ENCODE measurements at regions of chr17 and their contacts with region 1.

Region 1: DNA sequence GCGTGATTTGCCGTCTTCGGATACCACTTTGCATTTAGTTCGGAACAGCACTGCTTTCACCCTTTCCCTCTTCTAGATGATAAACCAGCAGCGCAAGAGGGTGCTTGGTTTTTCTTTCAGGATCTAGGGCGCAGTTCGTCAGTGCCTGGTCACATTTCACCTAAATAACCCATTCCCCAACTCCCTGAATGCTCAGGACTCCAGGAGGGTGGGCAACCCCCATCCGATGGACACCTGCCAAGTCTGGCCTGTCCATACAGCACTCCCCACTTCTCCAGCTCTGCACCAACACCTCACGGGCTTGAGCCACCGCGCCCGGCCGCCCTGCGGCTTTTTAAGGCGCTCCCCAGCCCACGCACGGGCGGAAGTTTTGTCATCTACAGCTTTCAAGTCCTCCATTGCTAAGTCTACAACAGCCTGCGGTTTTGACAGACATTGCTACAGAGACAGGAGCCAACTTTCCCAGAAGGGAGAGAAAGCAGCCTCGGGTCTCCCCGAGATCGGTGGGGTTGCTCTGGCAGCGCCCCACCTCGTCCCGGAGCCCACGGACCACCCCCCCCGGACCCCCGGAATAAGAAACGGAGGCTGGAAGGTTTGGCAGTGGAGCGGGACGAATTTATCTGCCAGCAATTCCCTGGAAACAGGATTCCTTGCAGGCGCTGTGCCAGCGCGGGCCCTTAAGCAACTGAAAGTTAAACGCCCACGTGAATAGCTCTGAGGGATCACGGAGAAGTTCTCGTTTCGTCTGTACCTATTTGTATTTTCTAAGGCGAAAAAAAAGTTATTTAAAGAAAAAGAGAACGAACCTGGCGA is 38.6 kb upstream of the SLFN13 start:
- DNase-seq: peak; percentile 93
- H3K4me3 Mint-ChIP-seq: peak overlapping the region; percentile 80
- H3K27ac Mint-ChIP-seq: peak overlapping the region; percentile 88
- H3K4me1 Mint-ChIP-seq: peaks cover 45% of the 10 kb centered on the region
- H3K27me3 Mint-ChIP-seq: no peaks in the 10 kb centered on the region

Region 2: DNA sequence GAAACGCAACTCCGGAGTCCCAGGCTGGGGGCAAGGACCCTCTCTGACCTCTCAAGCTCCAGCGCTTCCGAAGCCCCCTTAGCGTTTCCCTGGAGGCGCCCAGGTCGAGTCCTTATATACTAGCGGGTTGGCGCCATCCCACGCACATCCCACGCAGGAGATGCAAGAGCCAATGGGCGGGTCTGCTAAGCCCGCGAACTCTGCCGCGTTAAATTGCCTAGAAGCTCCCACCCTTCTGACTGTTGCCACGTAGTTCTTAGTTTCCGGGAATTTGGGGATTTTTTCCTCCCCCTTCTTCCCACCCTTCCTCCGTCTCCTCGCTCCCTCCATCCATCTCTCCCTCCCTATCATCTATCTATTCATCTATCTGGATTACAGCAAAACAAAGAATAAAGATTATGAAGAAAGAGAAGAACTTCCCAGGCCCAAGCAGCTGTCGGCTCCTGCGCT is 113.6 kb before region 1 on chr17 and contains the start of gene SLFN11:
- CTCF ChIA-PET with region 1: interaction called, 4 read pairs
- POLR2A ChIA-PET with region 1: interaction called, 19 read pairs
- intact Hi-C with region 1: loop called (anchors 2 kb)
- DNase-seq: peak; percentile 94
- H3K4me3 Mint-ChIP-seq: peak within 1 kb of the TSS; percentile 96
- H3K27ac Mint-ChIP-seq: peak within 1 kb of the TSS; percentile 97
- H3K4me1 Mint-ChIP-seq: peaks cover 53% of the 10 kb centered on the region
- H3K27me3 Mint-ChIP-seq: no peaks in the 10 kb centered on the region
- total RNA-seq, gene SLFN11: 64.8 to 68.8 TPM

Region 3: DNA sequence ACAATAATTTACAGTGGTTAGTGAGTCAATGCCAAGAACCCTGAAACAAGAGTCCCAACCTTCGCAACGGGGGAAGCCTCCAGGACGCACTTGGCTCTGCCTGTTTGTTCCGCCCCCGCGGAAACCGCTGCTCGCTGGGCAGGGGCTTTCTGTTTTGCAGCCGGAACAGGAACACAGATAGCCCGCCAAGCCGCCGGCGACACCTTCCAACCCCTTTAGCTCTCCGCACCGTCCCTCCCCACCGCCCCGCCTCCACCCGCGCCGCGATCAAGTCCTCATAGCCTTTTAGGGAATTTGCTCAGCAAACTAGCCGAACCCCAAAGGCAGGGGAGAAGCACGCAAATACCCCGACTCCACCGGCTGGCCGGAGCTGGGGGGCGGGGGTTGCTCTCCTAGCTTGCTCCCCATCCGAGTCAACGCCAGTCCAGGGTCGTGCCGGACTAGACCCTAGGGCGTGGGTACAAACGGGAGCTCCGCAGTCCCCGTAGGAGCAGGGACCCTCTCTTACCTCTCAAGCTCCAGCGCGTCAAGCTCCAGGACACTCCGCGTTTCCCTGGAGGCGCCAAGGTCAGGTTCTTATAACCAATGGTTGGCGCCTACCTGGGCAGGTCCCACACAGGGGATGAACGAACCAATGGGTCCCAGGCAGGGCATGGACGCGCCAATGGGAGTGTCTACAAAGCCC is 38.8 kb before region 1 on chr17 and contains the start of gene SLFN13:
- CTCF ChIA-PET with region 1: interaction called, 14 read pairs
- POLR2A ChIA-PET with region 1: interaction called, 12 read pairs
- intact Hi-C with region 1: loop called (anchors 1 kb)
- DNase-seq: peak; percentile 97
- H3K4me3 Mint-ChIP-seq: peak within 1 kb of the TSS; percentile 57
- H3K27ac Mint-ChIP-seq: peak within 1 kb of the TSS; percentile 33
- H3K4me1 Mint-ChIP-seq: peaks cover 16% of the 10 kb centered on the region
- H3K27me3 Mint-ChIP-seq: no peaks in the 10 kb centered on the region
- total RNA-seq, gene SLFN13: 46.0 to 48.7 TPM

Region 4: DNA sequence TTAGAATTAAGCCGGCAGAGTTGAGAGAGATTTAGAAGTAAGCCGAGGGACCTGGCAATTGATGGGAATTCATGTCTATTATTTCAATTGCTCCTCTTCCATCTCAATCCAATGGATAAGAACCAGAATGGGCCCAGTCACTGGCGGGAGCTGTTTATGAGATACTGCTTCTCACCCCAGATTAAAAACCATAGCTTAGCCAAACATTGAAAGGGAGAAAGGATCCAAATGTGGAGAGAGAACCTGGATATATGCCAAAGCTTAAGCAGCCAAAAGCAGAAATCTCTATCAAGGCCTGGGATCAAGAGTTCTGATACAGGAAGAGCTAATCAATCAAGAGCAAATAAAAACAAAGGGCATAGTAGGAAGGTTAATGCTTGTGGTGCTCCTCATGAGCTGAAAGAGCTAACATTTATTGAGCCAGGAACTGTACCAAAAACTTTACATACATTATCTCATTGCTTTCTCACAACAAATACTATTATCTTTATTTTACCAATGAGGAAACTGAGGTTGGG is 47.5 kb after region 1 on chr17:
- CTCF ChIA-PET with region 1: interaction called, 42 read pairs
- POLR2A ChIA-PET with region 1: interaction called, 14 read pairs
- intact Hi-C with region 1: loop called (anchors 1 kb)
- DNase-seq: no peak
- H3K4me3 Mint-ChIP-seq: peak overlapping the region; percentile 75
- H3K27ac Mint-ChIP-seq: peak overlapping the region; percentile 97
- H3K4me1 Mint-ChIP-seq: peaks cover 48% of the 10 kb centered on the region
- H3K27me3 Mint-ChIP-seq: no peaks in the 10 kb centered on the region

Measured in activated CD4-positive, alpha-beta memory T cell treated with anti-CD3 and anti-CD28 coated beads for 36 hours (primary cell).